Mammary epithelial cell (primary cell): ENCODE measurements at regions of chr2 and their contacts with region 1.

Region 1: DNA sequence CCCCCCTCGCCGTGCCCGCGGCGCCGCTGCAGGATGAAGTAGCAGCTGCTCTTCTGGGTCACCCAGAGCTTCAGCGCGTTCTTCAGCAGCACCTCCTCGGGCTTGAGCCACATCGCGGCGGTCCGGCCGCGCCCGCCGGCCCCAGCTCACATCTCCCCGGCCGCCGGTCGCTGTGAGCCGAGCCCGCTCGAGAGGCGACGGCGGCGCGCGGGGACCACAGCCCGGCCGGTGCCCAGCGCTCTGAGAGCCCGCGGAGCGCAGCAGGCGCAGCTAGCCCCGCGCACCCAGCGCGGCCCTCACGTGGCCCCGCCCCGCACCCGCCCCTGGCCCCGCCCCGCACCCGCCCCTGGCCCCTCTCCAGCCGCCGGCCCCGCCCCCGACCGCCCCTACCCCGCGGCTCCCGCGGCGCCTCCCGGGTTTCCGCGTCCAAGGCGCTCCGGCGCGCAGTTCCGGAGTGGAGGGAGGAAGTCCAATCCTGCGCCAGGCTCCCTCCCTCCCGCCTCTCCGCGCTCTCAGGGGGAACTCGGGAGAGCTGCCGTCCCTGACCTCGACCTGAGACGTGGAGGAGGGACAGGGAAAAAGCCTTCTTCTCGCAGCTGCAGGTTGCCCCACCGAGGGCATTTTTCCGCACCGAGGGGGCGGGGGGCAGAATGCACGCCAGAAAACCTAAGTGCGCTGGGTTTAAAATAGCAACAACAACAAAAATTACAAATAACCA is at the start of gene TBC1D8:
- DNase-seq: peak; percentile 74
- H3K4me3 ChIP-seq: peak within 1 kb of the TSS; percentile 76 to 83 (median 82)
- H3K27ac ChIP-seq: peak within 1 kb of the TSS; percentile 55
- H3K4me1 ChIP-seq: peaks cover 25% of the 10 kb centered on the region
- H3K27me3 ChIP-seq: no peaks in the 10 kb centered on the region
- CTCF ChIP-seq: no peak
- total RNA-seq, gene TBC1D8: 9.0 to 19.2 TPM

Region 2: GRCh38 chr2:100610381-100610831 is 540.9 kb before region 1 on chr2:
- CTCF ChIA-PET with region 1: no interaction called
- dilution Hi-C with region 1: no loop called
- in situ Hi-C with region 1: no loop called
- intact Hi-C with region 1: loop called (anchors 2 kb)
- DNase-seq: peak; percentile 37
- H3K4me3 ChIP-seq: no peak overlapping the region
- H3K27ac ChIP-seq: no peak overlapping the region
- H3K4me1 ChIP-seq: no peaks in the 10 kb centered on the region
- H3K27me3 ChIP-seq: no peaks in the 10 kb centered on the region
- CTCF ChIP-seq: peak; percentile 50 to 75

Region 3: DNA sequence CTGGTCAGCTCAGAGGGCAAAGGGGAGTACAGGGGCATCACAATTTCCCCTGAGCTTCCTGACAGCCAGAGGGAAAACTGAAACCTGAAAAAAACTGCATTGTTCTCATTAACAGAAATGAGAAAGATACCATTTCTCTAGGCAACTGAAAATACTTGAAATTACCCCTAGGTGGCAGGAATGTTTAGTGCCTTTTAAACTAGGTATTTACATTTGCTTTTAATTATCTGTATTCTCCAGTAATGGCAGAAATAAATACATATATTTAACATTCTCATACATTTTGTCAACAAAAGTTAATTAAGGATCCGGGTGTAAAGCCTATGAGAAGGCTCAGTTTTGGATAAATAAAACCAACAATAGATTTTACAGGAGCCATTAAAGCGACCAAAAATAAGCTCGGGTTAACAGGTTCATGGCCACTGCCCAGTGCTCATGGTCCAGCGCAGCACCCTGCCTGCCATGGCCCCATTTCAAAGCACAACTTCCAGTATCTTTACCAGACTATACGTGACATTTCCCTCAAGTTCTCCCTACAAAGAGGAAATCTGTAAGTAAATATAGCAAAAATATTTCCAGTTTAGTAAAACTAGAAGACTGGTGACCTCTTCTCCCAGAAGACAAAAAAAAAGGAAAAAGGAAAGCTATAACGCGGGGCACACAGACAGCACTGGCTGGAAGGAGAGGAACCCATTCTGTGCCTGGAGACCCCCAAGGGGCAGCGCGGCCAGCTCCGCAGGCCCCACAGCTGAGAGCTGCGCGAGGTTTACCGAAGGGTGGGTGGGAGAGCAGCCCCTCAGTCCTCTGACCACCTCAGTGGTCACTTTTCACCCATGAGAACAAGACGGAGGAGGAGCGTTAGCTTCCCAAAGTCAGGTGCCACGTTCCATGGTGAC is 114.5 kb before region 1 on chr2:
- CTCF ChIA-PET with region 1: interaction called, 4 read pairs
- dilution Hi-C with region 1: no loop called
- in situ Hi-C with region 1: loop called (anchors 5 kb)
- intact Hi-C with region 1: loop called (anchors 1 kb)
- DNase-seq: peak; percentile 8
- H3K4me3 ChIP-seq: no peak overlapping the region
- H3K27ac ChIP-seq: no peak overlapping the region
- H3K4me1 ChIP-seq: no peaks in the 10 kb centered on the region
- H3K27me3 ChIP-seq: no peaks in the 10 kb centered on the region
- CTCF ChIP-seq: peak; percentile 52 to 58

Region 4: DNA sequence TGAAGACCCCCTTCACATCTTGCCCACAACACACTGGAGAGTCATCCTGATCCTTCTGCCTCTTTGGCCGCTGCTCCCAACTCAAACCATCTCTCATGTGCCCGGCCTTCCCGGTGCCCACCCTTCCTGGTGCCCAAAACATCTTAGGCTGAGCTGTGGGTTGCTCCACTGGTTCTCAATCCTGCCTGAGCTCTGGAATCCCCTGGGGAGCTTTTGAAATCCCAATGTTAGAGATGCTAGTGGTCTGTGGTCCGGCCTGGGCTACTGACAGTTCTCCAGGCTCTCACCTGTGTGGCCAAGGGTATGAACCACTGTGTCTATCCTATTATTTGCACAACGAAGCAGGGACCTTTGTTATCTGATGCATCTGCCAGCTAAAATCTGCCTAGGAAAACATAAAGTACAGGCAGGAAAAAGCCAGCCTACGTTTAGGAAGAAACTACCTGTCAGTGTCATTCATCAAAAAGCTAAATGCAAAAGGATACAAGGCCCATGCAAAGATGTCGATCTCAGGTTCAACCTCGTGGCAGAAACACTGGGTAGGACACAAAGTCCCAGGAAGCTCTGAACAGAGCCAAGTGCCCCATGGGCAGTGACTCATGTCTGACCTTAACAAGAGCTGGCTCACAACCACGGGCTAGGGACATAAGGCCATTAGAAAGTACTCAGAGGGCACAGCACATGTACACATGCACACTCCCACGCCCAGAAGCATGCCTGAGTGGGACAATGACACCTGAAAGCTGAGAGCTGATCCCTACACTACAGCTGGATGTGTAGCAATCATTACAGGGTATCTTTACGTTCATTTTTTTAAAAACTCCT is 30.9 kb before region 1 on chr2:
- CTCF ChIA-PET with region 1: no interaction called
- dilution Hi-C with region 1: no loop called
- in situ Hi-C with region 1: no loop called
- intact Hi-C with region 1: loop called (anchors 1 kb)
- DNase-seq: peak; percentile 87
- H3K4me3 ChIP-seq: no peak overlapping the region
- H3K27ac ChIP-seq: peak overlapping the region; percentile 62
- H3K4me1 ChIP-seq: peaks cover 52% of the 10 kb centered on the region
- H3K27me3 ChIP-seq: no peaks in the 10 kb centered on the region
- CTCF ChIP-seq: no peak

Region 5: GRCh38 chr2:101205521-101205998 is 54.3 kb after region 1 on chr2:
- CTCF ChIA-PET with region 1: no interaction called
- dilution Hi-C with region 1: no loop called
- in situ Hi-C with region 1: loop called in 1 of 2 experiments (anchors 10 kb)
- intact Hi-C with region 1: loop called (anchors 1 kb)
- DNase-seq: peak; percentile 82
- H3K4me3 ChIP-seq: peak overlapping the region; percentile 10 to 55 (median 42)
- H3K27ac ChIP-seq: peak overlapping the region; percentile 48
- H3K4me1 ChIP-seq: peaks cover 8% of the 10 kb centered on the region
- H3K27me3 ChIP-seq: no peaks in the 10 kb centered on the region
- CTCF ChIP-seq: peak; percentile 60 to 70

Region 6: DNA sequence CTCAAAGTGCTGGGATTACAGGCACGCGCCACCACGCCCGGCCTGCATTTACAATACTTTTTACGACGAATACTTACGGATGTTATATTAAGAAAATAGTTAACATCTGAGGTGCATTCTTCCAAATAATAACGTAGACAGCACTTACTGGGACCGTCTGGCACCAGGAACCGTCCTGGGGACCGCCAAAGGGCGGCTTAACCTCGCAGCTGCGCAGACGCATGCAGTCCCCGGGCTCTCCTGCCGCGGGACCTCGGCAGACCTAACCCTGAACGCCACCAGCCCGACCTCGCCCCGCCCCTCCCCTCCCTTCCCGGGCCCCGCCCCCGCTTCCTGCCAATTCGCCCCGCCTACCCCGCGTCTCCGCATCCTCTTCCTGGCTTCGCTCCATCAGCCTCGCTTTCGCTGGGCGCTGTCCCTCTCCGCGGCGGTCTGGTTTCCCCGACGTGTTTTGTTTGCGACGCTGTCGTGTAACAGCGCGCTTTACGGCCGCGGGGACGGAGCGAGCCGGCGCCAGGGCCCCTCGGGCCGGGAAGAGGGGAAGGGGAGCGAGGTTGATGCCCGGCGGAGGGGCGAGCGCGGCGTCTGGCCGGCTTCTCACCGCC is 101.2 kb after region 1 on chr2 and contains the start of gene CNOT11:
- CTCF ChIA-PET with region 1: no interaction called
- dilution Hi-C with region 1: no loop called
- in situ Hi-C with region 1: no loop called
- intact Hi-C with region 1: loop called (anchors 5 kb)
- DNase-seq: peak; percentile 98
- H3K4me3 ChIP-seq: peak within 1 kb of the TSS; percentile 71 to 89 (median 88)
- H3K27ac ChIP-seq: peak within 1 kb of the TSS; percentile 85
- H3K4me1 ChIP-seq: peaks cover 31% of the 10 kb centered on the region
- H3K27me3 ChIP-seq: no peaks in the 10 kb centered on the region
- CTCF ChIP-seq: peak in 1 of 2 donors; percentile 1
- total RNA-seq, gene CNOT11: 43.8 to 53.7 TPM